Heart left ventricle (tissue), 16 donors: ENCODE measurements at regions of chr2 and their contacts with region 1.

Region 1: DNA sequence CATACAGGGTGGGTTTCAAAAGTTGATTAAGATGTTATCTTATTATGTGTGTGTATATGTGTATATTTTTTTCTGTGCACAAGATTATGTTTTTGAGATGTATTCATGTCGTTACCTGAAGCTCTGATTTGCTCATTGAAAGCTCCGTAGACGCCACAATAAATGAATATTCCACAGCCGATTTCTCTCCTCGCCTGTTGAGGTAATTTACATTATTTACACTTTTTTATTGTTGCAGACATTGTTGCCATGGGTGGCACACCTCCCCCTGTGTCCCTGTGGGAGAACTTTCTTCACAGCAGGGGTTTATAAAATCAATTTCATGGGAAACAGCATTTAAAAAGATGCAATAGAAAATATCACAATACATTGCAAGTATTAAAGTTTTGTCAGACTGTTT is 100.6 kb downstream of the GLI2 start:
- DNase-seq: no peak
- ATAC-seq: no peak
- H3K4me3 ChIP-seq: no peak overlapping the region
- H3K27ac ChIP-seq: no peak overlapping the region
- H3K4me1 ChIP-seq: peaks cover 0 to under 1% (median 0%) of the 10 kb centered on the region in 12 donors
- H3K27me3 ChIP-seq: no peaks in the 10 kb centered on the region
- CTCF ChIP-seq: no peak
- POLR2A ChIP-seq: no peak

Region 2: DNA sequence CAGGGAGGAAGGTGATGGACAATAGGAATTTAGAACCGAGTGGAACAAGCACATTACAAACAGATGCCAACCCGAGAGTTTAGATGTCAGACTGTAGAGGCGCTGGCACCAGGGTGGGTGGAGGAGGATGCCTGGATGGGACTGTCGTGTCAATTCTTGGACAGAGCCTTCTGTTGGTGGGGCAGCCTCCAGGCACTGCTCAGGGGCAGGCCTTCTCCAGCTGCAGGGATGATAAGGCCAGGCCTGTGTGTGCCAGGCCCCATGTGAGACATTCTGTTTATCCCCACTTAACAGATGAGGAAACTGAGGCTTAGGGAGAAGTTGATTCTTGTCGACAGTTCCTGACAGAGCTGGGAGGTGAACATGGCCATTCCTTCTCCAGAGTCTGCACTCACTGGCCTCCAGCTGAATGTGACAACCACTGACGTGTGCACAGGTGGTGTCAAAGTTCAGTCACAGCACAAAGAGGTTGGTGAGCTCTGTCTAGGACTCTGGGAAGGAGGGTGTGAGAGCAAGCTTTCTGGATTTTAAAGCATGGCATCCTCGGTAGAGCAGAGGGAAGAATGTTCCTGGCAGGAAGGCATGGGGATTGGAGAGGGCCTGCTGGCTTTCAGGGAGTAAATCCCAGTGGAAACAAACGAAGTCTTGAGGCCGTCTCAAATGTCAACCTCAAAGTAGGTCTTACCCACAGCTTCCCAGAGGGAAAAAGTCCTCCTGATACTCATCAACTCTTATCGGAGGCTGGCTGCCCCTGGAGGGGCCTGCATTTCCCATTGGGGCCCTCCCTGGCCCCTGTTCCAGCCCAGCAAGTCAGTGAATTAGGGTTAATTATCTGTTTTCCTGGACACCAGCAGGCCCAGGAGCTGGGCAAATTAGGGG is 48.2 kb before region 1 on chr2:
- intact Hi-C with region 1: loop called in 1 of 10 experiments (anchors 5 kb)
- DNase-seq: no peak
- ATAC-seq: no peak
- H3K4me3 ChIP-seq: no peak overlapping the region
- H3K27ac ChIP-seq: no peak overlapping the region
- H3K4me1 ChIP-seq: peaks cover 0 to 14% (median 8%) of the 10 kb centered on the region in 12 donors
- H3K27me3 ChIP-seq: no peaks in the 10 kb centered on the region
- CTCF ChIP-seq: no peak
- POLR2A ChIP-seq: no peak